B cell (primary cell): ENCODE measurements at regions of chr22 and their contacts with region 1.

Region 1: GRCh38 chr22:22848364-22848866 is 39.2 kb upstream of the IGLL5 start:
- DNase-seq: peak; percentile 83
- ATAC-seq: peak; percentile 77
- H3K4me3 ChIP-seq: no peak overlapping the region
- H3K4me3 Mint-ChIP-seq: no peak overlapping the region
- H3K27ac ChIP-seq: no peak overlapping the region
- H3K27ac Mint-ChIP-seq: peak overlapping the region; percentile 32
- H3K4me1 ChIP-seq: peaks cover 28 to 29% of the 10 kb centered on the region in 2 donors
- H3K4me1 Mint-ChIP-seq: peaks cover 29% of the 10 kb centered on the region
- H3K27me3 ChIP-seq: peaks cover 0 to 3% (median 0%) of the 10 kb centered on the region in 4 experiments
- H3K27me3 Mint-ChIP-seq: peaks cover 16% of the 10 kb centered on the region
- CTCF ChIP-seq: peak; percentile 87

Region 2: GRCh38 chr22:22587577-22588188 is 260.7 kb before region 1 on chr22:
- CTCF ChIA-PET with region 1: interaction called, 10 read pairs
- POLR2A ChIA-PET with region 1: no interaction called
- intact Hi-C with region 1: no loop called
- DNase-seq: no peak
- ATAC-seq: no peak
- H3K4me3 ChIP-seq: no peak overlapping the region
- H3K4me3 Mint-ChIP-seq: no peak overlapping the region
- H3K27ac ChIP-seq: peak overlapping the region in 1 of 2 donors; percentile 23
- H3K27ac Mint-ChIP-seq: no peak overlapping the region
- H3K4me1 ChIP-seq: peaks cover 36 to 38% of the 10 kb centered on the region in 2 donors
- H3K4me1 Mint-ChIP-seq: peaks cover 33% of the 10 kb centered on the region
- H3K27me3 ChIP-seq: no peaks in the 10 kb centered on the region
- H3K27me3 Mint-ChIP-seq: no peaks in the 10 kb centered on the region
- CTCF ChIP-seq: no peak

Region 3: GRCh38 chr22:22787786-22788459 is 60.5 kb before region 1 on chr22:
- CTCF ChIA-PET with region 1: interaction called, 13 read pairs
- POLR2A ChIA-PET with region 1: no interaction called
- intact Hi-C with region 1: no loop called
- DNase-seq: peak; percentile 76
- ATAC-seq: peak; percentile 84
- H3K4me3 ChIP-seq: no peak overlapping the region
- H3K4me3 Mint-ChIP-seq: no peak overlapping the region
- H3K27ac ChIP-seq: no peak overlapping the region
- H3K27ac Mint-ChIP-seq: no peak overlapping the region
- H3K4me1 ChIP-seq: peaks cover 0 to 3% of the 10 kb centered on the region in 2 donors
- H3K4me1 Mint-ChIP-seq: no peaks in the 10 kb centered on the region
- H3K27me3 ChIP-seq: peaks cover 0 to 3% (median 0%) of the 10 kb centered on the region in 4 experiments
- H3K27me3 Mint-ChIP-seq: peaks cover 12% of the 10 kb centered on the region
- CTCF ChIP-seq: peak; percentile 81

Region 4: DNA sequence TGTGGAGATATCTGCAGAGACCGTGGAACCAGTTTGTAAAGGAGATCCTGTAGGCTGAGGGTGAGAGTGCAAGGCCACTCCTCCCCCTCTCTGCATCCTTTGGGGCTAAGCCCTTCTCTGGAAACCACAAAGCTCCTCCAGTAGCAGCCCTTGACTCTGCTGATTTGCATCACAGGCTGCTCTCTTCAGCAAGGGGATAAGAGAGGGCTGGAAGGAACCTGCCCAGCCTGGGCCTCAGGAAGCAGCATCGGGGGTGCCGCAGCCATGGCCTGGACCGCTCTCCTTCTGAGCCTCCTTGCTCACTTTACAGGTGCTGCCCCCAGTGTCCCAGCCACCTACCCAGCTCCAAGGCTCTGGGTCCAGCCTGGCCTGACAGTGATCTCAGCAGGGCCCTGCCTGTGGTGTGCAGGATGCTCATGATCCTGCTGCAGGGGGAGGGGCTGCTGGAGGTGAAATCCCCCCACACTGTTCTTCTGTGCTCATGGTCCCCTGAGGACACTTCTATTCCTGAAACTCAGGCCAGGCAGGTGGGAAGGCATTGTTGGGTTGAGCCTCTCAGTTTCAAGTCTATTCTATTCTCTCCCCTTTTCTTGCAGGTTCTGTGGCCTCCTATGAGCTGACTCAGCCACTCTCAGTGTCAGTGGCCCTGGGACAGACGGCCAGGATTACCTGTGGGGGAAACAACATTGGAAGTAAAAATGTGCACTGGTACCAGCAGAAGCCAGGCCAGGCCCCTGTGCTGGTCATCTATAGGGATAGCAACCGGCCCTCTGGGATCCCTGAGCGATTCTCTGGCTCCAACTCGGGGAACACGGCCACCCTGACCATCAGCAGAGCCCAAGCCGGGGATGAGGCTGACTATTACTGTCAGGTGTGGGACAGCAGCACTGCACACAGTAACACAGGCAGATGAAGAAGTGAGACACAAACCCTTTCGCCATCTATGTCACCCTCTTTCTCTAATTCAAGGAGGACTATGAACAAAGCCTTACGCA is 29.3 kb before region 1 on chr22:
- CTCF ChIA-PET with region 1: interaction called, 9 read pairs
- POLR2A ChIA-PET with region 1: no interaction called
- intact Hi-C with region 1: loop called (anchors 5 kb)
- DNase-seq: peak; percentile 42
- ATAC-seq: peak; percentile 51
- H3K4me3 ChIP-seq: no peak overlapping the region
- H3K4me3 Mint-ChIP-seq: peak overlapping the region; percentile 13
- H3K27ac ChIP-seq: no peak overlapping the region
- H3K27ac Mint-ChIP-seq: no peak overlapping the region
- H3K4me1 ChIP-seq: peaks cover 50 to 62% of the 10 kb centered on the region in 2 donors
- H3K4me1 Mint-ChIP-seq: peaks cover 57% of the 10 kb centered on the region
- H3K27me3 ChIP-seq: no peaks in the 10 kb centered on the region
- H3K27me3 Mint-ChIP-seq: no peaks in the 10 kb centered on the region
- CTCF ChIP-seq: no peak

Region 5: GRCh38 chr22:22865311-22866072 is 17.1 kb after region 1 on chr22:
- CTCF ChIA-PET with region 1: interaction called, 31 read pairs
- POLR2A ChIA-PET with region 1: no interaction called
- intact Hi-C with region 1: no loop called
- DNase-seq: peak; percentile 77
- ATAC-seq: peak; percentile 78
- H3K4me3 ChIP-seq: no peak overlapping the region
- H3K4me3 Mint-ChIP-seq: peak overlapping the region; percentile 39
- H3K27ac ChIP-seq: peak overlapping the region; percentile 39 to 45
- H3K27ac Mint-ChIP-seq: peak overlapping the region; percentile 74
- H3K4me1 ChIP-seq: peaks cover 29 to 35% of the 10 kb centered on the region in 2 donors
- H3K4me1 Mint-ChIP-seq: peaks cover 44% of the 10 kb centered on the region
- H3K27me3 ChIP-seq: no peaks in the 10 kb centered on the region
- H3K27me3 Mint-ChIP-seq: peaks cover 4% of the 10 kb centered on the region
- CTCF ChIP-seq: no peak

Region 6: DNA sequence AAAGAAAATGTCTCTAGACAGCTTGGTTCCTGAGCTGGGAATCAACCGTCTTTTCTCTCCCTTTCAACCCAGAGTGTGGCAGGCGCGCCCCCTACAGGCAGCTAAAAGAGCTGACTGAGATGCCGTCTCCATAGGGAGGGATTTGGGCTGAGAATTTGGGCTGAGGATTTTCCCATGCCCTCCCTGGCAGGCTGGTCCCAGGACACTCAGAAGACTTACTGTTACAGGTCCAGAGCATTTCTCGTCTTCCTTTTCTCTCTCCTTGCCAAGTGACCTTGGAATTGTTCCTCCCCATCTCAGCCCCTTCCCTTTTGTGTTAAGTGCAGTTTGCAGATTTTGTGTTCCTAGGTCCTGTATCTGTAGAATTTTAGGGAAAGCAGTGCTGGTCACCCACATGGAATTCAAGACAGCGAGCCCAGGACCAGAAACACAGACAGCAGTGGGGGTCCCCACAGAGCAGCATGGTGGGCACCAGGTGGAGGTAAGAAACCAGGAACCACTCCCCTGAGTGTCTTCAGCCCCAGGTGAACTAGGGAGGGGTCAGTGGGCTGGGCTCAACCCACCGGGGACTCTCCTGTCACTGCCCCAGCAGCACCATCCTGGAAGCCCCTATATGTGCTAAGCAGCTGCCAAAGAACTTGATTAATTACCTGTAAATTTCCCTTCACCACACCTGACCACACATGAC is 29.3 kb after region 1 on chr22:
- CTCF ChIA-PET with region 1: interaction called, 364 read pairs
- POLR2A ChIA-PET with region 1: interaction called, 10 read pairs
- intact Hi-C with region 1: no loop called
- DNase-seq: peak; percentile 64
- ATAC-seq: no peak
- H3K4me3 ChIP-seq: no peak overlapping the region
- H3K4me3 Mint-ChIP-seq: no peak overlapping the region
- H3K27ac ChIP-seq: no peak overlapping the region
- H3K27ac Mint-ChIP-seq: peak overlapping the region; percentile 20
- H3K4me1 ChIP-seq: peaks cover 50 to 52% of the 10 kb centered on the region in 2 donors
- H3K4me1 Mint-ChIP-seq: peaks cover 62% of the 10 kb centered on the region
- H3K27me3 ChIP-seq: peaks cover 0 to 4% (median 2%) of the 10 kb centered on the region in 4 experiments
- H3K27me3 Mint-ChIP-seq: no peaks in the 10 kb centered on the region
- CTCF ChIP-seq: peak; percentile 67

Region 7: DNA sequence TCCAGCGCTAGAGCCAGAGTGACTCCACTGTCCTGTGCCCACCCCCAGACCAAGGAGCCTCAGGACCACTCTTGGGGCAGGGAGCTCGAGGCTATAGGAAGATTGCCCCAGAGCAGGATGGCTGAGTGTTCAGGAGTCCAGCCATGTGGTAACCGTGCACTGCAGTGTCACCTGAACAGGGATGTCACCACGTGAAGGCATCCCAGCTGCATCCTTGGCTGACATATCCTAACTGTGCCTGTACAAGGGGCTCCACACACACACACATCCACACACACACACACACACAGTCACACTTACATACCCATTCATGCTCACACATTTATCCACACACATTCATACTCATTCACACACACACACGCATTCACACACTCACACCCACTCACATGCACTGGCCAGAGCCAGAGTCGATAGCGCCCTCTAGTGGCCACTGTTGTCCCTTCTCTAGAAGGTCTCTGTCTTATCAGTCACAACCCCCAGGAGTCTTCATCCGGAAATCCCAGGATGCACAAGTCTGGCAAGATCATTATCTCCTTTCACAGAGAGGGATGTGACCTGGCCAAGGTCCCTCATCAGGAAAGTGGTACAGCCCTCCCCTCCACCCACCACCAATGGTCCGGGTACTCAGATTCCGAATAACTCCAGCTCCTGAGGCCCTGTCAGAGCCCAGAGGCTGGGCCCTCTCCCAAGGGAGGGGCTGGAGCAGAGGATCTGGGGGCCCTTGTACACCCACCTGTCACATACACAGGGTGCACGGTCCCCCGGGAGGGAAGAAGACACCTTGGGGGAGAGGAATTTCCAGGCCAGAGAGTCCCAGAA is 94.3 kb after region 1 on chr22:
- CTCF ChIA-PET with region 1: interaction called, 91 read pairs
- POLR2A ChIA-PET with region 1: no interaction called
- intact Hi-C with region 1: loop called (anchors 1 kb)
- DNase-seq: peak; percentile 89
- ATAC-seq: peak; percentile 66
- H3K4me3 ChIP-seq: peak overlapping the region in 1 of 5 experiments; percentile 5
- H3K4me3 Mint-ChIP-seq: peak overlapping the region; percentile 51
- H3K27ac ChIP-seq: peak overlapping the region; percentile 66 to 79
- H3K27ac Mint-ChIP-seq: peak overlapping the region; percentile 83
- H3K4me1 ChIP-seq: peaks cover 92 to 96% of the 10 kb centered on the region in 2 donors
- H3K4me1 Mint-ChIP-seq: peaks cover 86% of the 10 kb centered on the region
- H3K27me3 ChIP-seq: no peaks in the 10 kb centered on the region
- H3K27me3 Mint-ChIP-seq: no peaks in the 10 kb centered on the region
- CTCF ChIP-seq: peak; percentile 83